IMR-90 (cell line): ENCODE measurements at regions of chr1 and their contacts with region 1.

Region 1: DNA sequence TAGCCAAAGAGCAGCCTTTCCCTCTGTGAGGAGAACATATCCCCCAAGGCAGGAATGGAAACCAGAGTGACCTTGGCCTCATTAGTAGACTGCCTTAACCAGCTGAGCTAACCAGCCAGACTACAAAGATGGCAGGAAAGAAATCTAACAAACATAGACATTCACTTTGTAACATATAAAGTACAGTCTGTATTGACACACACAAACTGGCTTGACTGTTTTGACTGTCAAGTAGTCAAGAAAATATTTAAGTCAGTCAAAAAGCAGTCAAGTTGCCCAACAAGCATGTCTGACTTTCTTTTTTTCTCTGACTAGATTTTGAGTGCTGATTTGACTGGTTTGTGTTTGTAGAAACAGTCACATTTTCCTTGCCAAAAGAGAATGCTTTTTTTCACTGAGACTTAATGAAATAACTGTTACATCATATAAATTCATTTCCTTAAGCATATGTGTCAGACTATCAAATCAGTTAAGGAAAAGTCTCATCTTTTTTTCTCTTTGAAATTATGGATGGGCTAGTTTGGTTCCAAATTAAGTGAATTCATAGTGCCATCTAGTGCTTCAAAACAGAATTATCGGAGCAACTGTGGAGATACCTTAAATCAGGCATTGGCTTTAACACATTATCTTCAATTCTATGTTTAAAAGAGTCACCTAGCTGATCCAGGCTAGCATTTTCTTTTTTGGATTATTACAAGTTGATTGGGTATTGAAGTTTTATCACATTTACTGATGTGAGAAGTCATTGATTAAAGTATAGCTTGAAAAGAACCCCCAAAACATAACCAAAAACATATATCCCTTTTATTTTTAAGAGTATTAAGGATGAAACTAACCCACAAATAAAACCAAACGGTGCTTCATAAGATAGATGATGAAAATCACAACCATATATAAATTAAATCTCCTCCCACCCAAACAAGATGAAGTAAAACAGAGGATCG is 75.0 kb downstream of the ATP6V1G3 start:
- DNase-seq: peak; percentile 70
- ATAC-seq: peak; percentile 88
- H3K4me3 ChIP-seq: no peak overlapping the region
- H3K27ac ChIP-seq: no peak overlapping the region
- H3K4me1 ChIP-seq: peaks cover 4% of the 10 kb centered on the region
- H3K27me3 ChIP-seq: no peaks in the 10 kb centered on the region
- CTCF ChIP-seq: peak; percentile 74
- POLR2A ChIP-seq: no peak
- RAD21 ChIP-seq: peak; percentile 85

Region 2: GRCh38 chr1:197521118-197521739 is 944.2 kb before region 1 on chr1:
- CTCF ChIA-PET with region 1: no interaction called
- POLR2A ChIA-PET with region 1: no interaction called
- dilution Hi-C with region 1: no loop called
- in situ Hi-C with region 1: loop called (anchors 10 kb)
- intact Hi-C with region 1: loop called (anchors 5 kb)
- DNase-seq: peak; percentile 44
- ATAC-seq: peak; percentile 66
- H3K4me3 ChIP-seq: no peak overlapping the region
- H3K27ac ChIP-seq: no peak overlapping the region
- H3K4me1 ChIP-seq: no peaks in the 10 kb centered on the region
- H3K27me3 ChIP-seq: no peaks in the 10 kb centered on the region
- CTCF ChIP-seq: peak; percentile 60
- POLR2A ChIP-seq: no peak
- RAD21 ChIP-seq: peak; percentile 43

Region 3: DNA sequence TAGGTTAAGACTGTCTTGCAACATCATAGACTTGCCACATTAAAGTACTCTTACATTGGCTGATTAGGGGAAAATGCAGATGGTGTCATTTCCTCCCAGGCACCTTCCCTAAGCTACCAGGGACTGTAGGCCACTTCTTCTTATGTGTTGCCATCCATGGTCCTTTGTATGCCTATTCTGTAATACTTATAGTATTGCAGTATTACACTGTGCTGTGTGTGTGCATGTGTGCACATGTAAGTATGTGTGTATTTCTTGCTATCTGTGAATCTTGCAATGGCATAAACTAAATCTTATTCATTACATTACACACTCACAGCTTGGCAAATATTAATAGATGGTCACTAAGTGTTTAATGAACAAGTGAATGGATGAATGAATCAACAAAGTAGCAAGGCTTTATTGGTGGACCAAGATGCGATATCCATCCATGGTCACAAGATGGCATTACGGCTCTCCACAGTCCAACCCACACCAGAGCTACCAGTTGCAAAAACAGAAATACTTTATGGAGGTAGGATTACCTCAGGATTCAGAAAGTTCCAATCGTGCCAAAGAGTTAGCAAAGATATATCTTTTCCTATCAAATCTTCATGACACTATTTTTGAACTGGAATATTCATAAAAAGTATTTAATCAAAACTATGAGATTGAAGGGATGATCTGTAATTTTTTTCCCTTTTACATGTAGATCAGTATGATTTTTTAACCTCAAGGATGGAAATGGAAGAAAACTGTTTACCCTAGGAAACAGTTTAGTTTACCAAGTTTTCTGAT is 850.4 kb before region 1 on chr1:
- CTCF ChIA-PET with region 1: interaction called, 3 read pairs
- POLR2A ChIA-PET with region 1: no interaction called
- dilution Hi-C with region 1: no loop called
- in situ Hi-C with region 1: loop called (anchors 25 kb)
- intact Hi-C with region 1: loop called (anchors 2 kb)
- DNase-seq: peak; percentile 51
- ATAC-seq: peak; percentile 91
- H3K4me3 ChIP-seq: no peak overlapping the region
- H3K27ac ChIP-seq: no peak overlapping the region
- H3K4me1 ChIP-seq: 0 out of 2 replicates have a peak, but pooled peaks cover 2% of the 10 kb centered on the region
- H3K27me3 ChIP-seq: no peaks in the 10 kb centered on the region
- CTCF ChIP-seq: peak; percentile 66
- POLR2A ChIP-seq: no peak
- RAD21 ChIP-seq: peak; percentile 78

Region 4: DNA sequence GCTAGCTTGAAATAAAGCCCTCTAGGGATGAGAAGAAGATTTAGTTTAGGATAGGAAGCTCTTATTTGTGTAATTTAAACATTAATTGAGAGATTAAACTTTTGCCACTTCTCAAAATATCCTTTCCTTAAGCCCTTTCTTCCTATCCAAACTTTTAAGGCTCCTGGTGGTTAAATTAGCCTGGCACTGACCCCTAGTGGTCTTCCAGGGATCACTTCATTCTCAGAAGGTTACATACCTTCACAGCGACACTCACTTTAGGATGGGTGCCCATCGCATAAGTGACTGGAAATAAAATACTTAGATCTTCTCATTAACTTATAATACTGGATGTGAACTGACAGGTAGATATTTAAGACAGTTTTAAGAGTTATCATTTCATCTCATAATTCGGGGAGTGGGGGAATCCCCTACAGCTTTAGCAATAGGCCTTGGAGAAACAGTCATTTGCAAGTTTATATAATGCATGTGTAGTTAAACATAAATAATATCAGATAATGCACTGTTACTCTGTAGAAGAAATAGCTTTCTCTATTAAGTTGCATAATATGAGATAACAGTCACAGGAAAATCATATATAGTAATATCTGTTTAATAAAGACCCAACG is 540.9 kb before region 1 on chr1:
- CTCF ChIA-PET with region 1: no interaction called
- POLR2A ChIA-PET with region 1: no interaction called
- dilution Hi-C with region 1: no loop called
- in situ Hi-C with region 1: loop called (anchors 10 kb)
- intact Hi-C with region 1: loop called (anchors 5 kb)
- DNase-seq: peak; percentile 61
- ATAC-seq: peak; percentile 83
- H3K4me3 ChIP-seq: no peak overlapping the region
- H3K27ac ChIP-seq: no peak overlapping the region
- H3K4me1 ChIP-seq: no peaks in the 10 kb centered on the region
- H3K27me3 ChIP-seq: peaks cover 55% of the 10 kb centered on the region
- CTCF ChIP-seq: peak; percentile 76
- POLR2A ChIP-seq: no peak
- RAD21 ChIP-seq: peak; percentile 78

Region 5: GRCh38 chr1:198102454-198102827 is 363.0 kb before region 1 on chr1:
- CTCF ChIA-PET with region 1: interaction called, 5 read pairs
- POLR2A ChIA-PET with region 1: no interaction called
- dilution Hi-C with region 1: no loop called
- in situ Hi-C with region 1: loop called (anchors 10 kb)
- intact Hi-C with region 1: no loop called
- DNase-seq: peak; percentile 70
- ATAC-seq: peak; percentile 82
- H3K4me3 ChIP-seq: peak overlapping the region; percentile 29; the same call in 1 of the 2 replicates
- H3K27ac ChIP-seq: no peak overlapping the region
- H3K4me1 ChIP-seq: peaks cover 9% of the 10 kb centered on the region
- H3K27me3 ChIP-seq: no peaks in the 10 kb centered on the region
- CTCF ChIP-seq: no peak
- POLR2A ChIP-seq: no peak
- RAD21 ChIP-seq: no peak

Region 6: DNA sequence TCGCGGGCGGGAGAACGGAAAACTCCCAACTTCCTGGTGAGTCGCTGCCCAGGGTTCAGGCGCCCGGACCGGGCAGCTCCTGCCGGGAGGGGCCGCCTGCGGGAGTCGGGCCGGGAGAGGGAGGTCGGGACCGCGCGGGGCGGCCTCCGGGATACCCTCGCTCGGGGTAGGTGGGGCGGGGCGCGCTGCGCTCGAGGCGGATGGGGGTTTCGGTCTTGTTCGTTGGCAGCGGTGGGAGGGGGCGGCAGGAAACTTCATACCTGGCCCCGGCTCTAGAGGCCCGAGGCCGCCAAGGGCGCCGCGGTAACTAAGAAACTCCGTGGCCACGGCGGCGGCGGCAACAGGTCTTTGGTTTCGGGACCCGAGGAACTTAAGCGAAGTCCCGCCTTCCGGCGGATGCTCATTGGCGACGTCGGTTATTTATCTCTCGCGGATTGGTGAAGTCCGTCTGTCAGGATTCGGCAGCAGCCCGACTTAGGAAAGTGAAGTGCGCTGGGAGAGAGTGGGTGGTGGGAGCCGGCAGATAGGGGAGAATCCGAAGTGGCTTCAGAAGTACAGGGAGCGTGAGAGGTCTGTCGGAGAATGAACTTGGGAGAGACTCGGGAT is 308.1 kb before region 1 on chr1:
- CTCF ChIA-PET with region 1: no interaction called
- POLR2A ChIA-PET with region 1: interaction called, 6 read pairs
- dilution Hi-C with region 1: no loop called
- in situ Hi-C with region 1: no loop called
- intact Hi-C with region 1: loop called (anchors 1 kb)
- DNase-seq: peak; percentile 97
- ATAC-seq: peak; percentile 62
- H3K4me3 ChIP-seq: peak overlapping the region; percentile 77
- H3K27ac ChIP-seq: peak overlapping the region; percentile 93
- H3K4me1 ChIP-seq: peaks cover 6% of the 10 kb centered on the region
- H3K27me3 ChIP-seq: no peaks in the 10 kb centered on the region
- CTCF ChIP-seq: no peak
- POLR2A ChIP-seq: no peak; the same call in 1 of the 2 replicates
- RAD21 ChIP-seq: no peak